ENCODE measurements at regions of chr1 and their contacts with region 1.

Region 1: DNA sequence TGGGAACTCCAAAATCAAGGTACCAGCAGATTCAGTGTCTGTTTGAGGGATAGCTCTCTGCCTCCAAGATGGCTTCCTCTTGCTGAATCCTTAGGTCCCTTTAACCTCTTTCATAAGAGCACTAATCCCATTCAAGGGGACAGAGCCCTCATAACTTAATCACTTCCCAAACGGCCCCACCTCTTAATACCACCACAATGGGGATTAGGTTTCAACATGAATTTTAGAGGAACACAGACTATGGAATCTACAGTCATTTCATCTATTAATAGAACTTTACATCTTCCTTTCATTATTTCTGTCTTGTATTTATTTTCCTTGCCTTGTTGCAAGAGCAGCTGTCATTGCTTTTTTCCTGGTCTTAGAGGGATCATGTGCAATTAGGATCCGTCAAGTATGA is 30.3 kb downstream of the HOOK1 start:
- DNase-seq: no peak
- ATAC-seq: no peak
- H3K4me3 ChIP-seq: no peak overlapping the region
- H3K27ac ChIP-seq: no peak overlapping the region
- H3K4me1 ChIP-seq: no peaks in the 10 kb centered on the region
- H3K27me3 ChIP-seq: no peaks in the 10 kb centered on the region
- CTCF ChIP-seq: no peak
- EP300 ChIP-seq: no peak
- POLR2A ChIP-seq: no peak
- RAD21 ChIP-seq: no peak

Region 2: GRCh38 chr1:59759156-59759925 is 85.8 kb before region 1 on chr1:
- CTCF ChIA-PET with region 1: no interaction called
- POLR2A ChIA-PET with region 1: no interaction called
- in situ Hi-C with region 1: no loop called
- intact Hi-C with region 1: no loop called
- DNase-seq: peak; percentile 66
- ATAC-seq: peak; percentile 96
- H3K4me3 ChIP-seq: 0 out of 6 replicates have a peak overlapping the region, but pooled peaks of 1 of the 3 experiments have one; percentile 6
- H3K27ac ChIP-seq: no peak overlapping the region
- H3K4me1 ChIP-seq: peaks cover 6% of the 10 kb centered on the region
- H3K27me3 ChIP-seq: no peaks in the 10 kb centered on the region
- CTCF ChIP-seq: peak; percentile 97
- EP300 ChIP-seq: no peak
- POLR2A ChIP-seq: no peak
- RAD21 ChIP-seq: peak; percentile 97

Region 3: GRCh38 chr1:59831527-59832137 is 13.5 kb before region 1 on chr1:
- CTCF ChIA-PET with region 1: no interaction called
- POLR2A ChIA-PET with region 1: no interaction called
- in situ Hi-C with region 1: no loop called
- intact Hi-C with region 1: loop called (anchors 2 kb)
- DNase-seq: no peak
- ATAC-seq: no peak
- H3K4me3 ChIP-seq: no peak overlapping the region
- H3K27ac ChIP-seq: no peak overlapping the region
- H3K4me1 ChIP-seq: no peaks in the 10 kb centered on the region
- H3K27me3 ChIP-seq: no peaks in the 10 kb centered on the region; a peak in 1 of 5 replicates
- CTCF ChIP-seq: no peak
- EP300 ChIP-seq: no peak
- POLR2A ChIP-seq: no peak
- RAD21 ChIP-seq: no peak

Measured in HepG2 (cell line).